ENCODE measurements at regions of chr22 and their contacts with region 1.

Region 1: GRCh38 chr22:19962233-19962908 is 20.8 kb upstream of the TXNRD2 start:
- DNase-seq: no peak
- H3K4me3 ChIP-seq: no peak overlapping the region
- H3K27ac ChIP-seq: no peak overlapping the region
- H3K27me3 ChIP-seq: no peaks in the 10 kb centered on the region
- CTCF ChIP-seq: peak; percentile 68

Region 2: DNA sequence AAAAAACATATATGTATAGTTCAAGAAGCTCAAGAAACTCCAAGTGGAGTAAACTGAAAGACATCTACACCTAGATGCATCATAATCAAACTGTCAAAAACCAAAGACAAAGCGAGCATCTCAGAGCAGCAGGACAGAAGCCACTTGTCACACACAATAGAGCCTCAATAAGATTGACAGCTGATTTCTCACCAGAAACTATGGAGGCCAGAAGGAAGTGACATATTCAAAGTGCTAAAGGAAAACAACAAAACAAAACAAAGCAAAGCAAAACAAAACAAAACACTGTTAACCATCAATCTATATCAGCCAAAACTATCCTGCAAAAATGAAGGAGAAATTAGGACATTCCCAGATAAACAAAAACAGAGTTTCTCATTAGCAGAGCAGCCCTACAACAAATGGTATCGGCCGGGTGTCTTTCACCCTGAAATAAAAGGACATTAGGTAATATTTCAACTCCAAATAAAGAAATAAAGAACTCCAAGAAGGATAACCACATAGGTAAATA is 313.9 kb before region 1 on chr22:
- CTCF ChIA-PET with region 1: no interaction called
- POLR2A ChIA-PET with region 1: no interaction called
- DNase-seq: no peak
- H3K4me3 ChIP-seq: no peak overlapping the region
- H3K27ac ChIP-seq: no peak overlapping the region
- H3K27me3 ChIP-seq: peaks cover 21% of the 10 kb centered on the region
- CTCF ChIP-seq: no peak

Region 3: GRCh38 chr22:19948057-19948760 is 14.2 kb before region 1 on chr22:
- CTCF ChIA-PET with region 1: interaction called, 24 read pairs
- POLR2A ChIA-PET with region 1: no interaction called
- DNase-seq: no peak
- H3K4me3 ChIP-seq: no peak overlapping the region
- H3K27ac ChIP-seq: peak overlapping the region; percentile 40
- H3K27me3 ChIP-seq: no peaks in the 10 kb centered on the region
- CTCF ChIP-seq: no peak

Region 4: GRCh38 chr22:20008221-20008995 is 46.0 kb after region 1 on chr22:
- CTCF ChIA-PET with region 1: interaction called, 13 read pairs
- POLR2A ChIA-PET with region 1: no interaction called
- DNase-seq: no peak
- H3K4me3 ChIP-seq: no peak overlapping the region
- H3K27ac ChIP-seq: no peak overlapping the region
- H3K27me3 ChIP-seq: peaks cover 2% of the 10 kb centered on the region
- CTCF ChIP-seq: no peak